Psoas muscle (tissue), 8 donors: ENCODE measurements at regions of chr9 and their contacts with region 1.

Region 1: GRCh38 chr9:137067860-137068538 is 2.4 kb downstream of the SAPCD2 start:
- DNase-seq: peak; percentile 74 to 87
- ATAC-seq: peak; percentile 55 to 71 (median 66)
- H3K4me3 ChIP-seq: no peak overlapping the region
- H3K27ac ChIP-seq: no peak overlapping the region
- H3K4me1 ChIP-seq: peaks cover 4% of the 10 kb centered on the region
- H3K27me3 ChIP-seq: peaks cover 0 to 10% (median 5%) of the 10 kb centered on the region in 3 donors
- CTCF ChIP-seq: peak; percentile 73

Region 2: GRCh38 chr9:137046098-137046787 is 21.8 kb before region 1 on chr9 and contains the start of gene NPDC1:
- intact Hi-C with region 1: loop called in 1 of 2 experiments (anchors 2 kb)
- DNase-seq: peak; percentile 76 to 82
- ATAC-seq: peak; percentile 64 to 83 (median 70)
- H3K4me3 ChIP-seq: peak within 1 kb of the TSS; percentile 69
- H3K27ac ChIP-seq: peak within 1 kb of the TSS; percentile 50
- H3K4me1 ChIP-seq: peaks cover 18% of the 10 kb centered on the region
- H3K27me3 ChIP-seq: peaks cover 0 to 60% (median 10%) of the 10 kb centered on the region in 3 donors
- CTCF ChIP-seq: peak; percentile 73
- total RNA-seq, gene NPDC1: 17.3 to 32.1 (median 22.6) TPM

Region 3: GRCh38 chr9:137057545-137057944 is 10.5 kb before region 1 on chr9:
- intact Hi-C with region 1: no loop called
- DNase-seq: no peak
- ATAC-seq: no peak
- H3K4me3 ChIP-seq: no peak overlapping the region
- H3K27ac ChIP-seq: no peak overlapping the region
- H3K4me1 ChIP-seq: peaks cover 9% of the 10 kb centered on the region
- H3K27me3 ChIP-seq: peaks cover 0 to 43% (median 19%) of the 10 kb centered on the region in 3 donors
- CTCF ChIP-seq: no peak